ENCODE measurements at regions of chr1 and their contacts with region 1.

Region 1: DNA sequence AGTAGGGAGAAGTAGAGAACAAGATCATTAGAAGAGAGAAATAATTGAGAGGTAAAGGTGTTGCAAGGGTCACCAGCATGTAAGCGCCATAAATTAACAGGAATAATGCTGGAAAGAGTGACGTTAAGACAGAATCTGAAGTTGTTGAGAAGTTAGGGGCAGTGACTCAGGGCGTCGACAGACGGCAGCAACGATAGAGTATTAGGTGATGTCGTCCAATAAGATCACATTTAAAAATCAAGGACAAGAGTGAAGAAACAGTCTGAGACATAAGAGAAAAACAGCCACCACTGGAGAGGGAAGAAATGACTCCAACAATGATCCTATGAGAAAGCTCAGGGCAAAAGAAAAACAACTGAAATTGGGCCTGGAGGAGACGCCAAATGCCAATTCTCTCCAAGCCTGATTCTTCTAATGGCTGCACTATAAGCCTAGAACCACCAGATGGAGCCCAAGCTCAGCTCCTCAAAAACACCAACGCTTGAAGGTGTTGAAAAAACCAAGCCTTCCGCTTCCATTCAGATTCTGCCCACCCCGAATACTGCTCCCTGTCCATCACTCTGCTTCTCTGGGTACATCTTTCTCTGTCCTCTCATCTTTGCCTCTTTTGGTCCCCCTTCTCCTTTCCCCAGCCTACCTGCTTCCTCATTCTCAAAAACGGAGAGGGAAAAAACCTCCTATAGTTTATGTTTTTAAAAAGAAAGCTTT is 70.0 kb downstream of the LUZP1 start:
- DNase-seq: peak; percentile 52 to 59
- H3K4me3 ChIP-seq: no peak overlapping the region
- H3K4me3 Mint-ChIP-seq: no peak overlapping the region
- H3K27ac Mint-ChIP-seq: peak overlapping the region; percentile 41
- H3K4me1 ChIP-seq: peaks cover 15% of the 10 kb centered on the region
- H3K4me1 Mint-ChIP-seq: peaks cover 50% of the 10 kb centered on the region
- H3K27me3 ChIP-seq: no peaks in the 10 kb centered on the region
- H3K27me3 Mint-ChIP-seq: no peaks in the 10 kb centered on the region
- CTCF ChIP-seq: peak; percentile 78 to 80

Region 2: DNA sequence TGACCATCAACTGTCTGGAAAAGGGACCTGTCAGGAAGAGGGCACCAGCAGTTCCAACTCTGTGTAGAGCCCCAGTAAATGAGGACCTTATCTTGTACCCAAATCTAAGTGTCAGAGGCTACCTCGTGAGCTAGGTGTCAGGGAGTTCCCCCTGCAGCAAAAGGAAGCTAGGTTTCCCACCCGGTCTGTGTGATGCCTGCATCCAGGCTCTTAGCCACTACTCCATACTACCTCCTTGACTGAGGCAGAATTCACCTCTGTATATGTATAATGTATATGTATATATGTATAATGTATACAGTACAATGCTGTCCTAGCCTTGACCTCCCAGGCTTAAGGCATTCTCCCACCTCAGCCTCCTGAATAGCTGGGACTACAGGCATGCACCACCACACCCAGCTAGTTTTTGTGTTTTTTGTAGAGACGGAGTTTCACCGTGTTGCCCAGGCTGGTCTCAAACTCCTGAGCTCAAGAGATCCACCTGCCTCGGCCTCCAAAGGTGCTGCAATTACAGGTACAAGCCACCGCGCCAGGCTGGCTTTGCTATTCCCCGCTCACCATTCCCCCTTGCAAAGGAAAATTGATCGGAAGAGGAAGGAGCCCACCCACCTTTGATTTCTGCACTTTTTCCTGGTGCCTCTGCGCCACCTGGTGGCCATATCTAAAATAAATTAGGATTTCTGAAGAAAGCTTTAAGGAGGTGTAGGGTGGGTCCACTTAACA is 85.8 kb after region 1 on chr1:
- CTCF ChIA-PET with region 1: interaction called, 84 read pairs
- POLR2A ChIA-PET with region 1: interaction called, 3 read pairs
- intact Hi-C with region 1: loop called (anchors 1 kb)
- DNase-seq: peak in 1 of 2 experiments; percentile 45
- H3K4me3 ChIP-seq: peak overlapping the region; percentile 23
- H3K4me3 Mint-ChIP-seq: peak overlapping the region; percentile 64
- H3K27ac Mint-ChIP-seq: no peak overlapping the region
- H3K4me1 ChIP-seq: no peaks in the 10 kb centered on the region
- H3K4me1 Mint-ChIP-seq: peaks cover 7% of the 10 kb centered on the region
- H3K27me3 ChIP-seq: no peaks in the 10 kb centered on the region
- H3K27me3 Mint-ChIP-seq: no peaks in the 10 kb centered on the region
- CTCF ChIP-seq: peak; percentile 63 to 76

Region 3: GRCh38 chr1:23216771-23217420 is 118.3 kb after region 1 on chr1:
- CTCF ChIA-PET with region 1: no interaction called
- POLR2A ChIA-PET with region 1: no interaction called
- intact Hi-C with region 1: no loop called
- DNase-seq: peak in 1 of 2 experiments; percentile 63
- H3K4me3 ChIP-seq: peak overlapping the region; percentile 71
- H3K4me3 Mint-ChIP-seq: peak overlapping the region; percentile 68
- H3K27ac Mint-ChIP-seq: no peak overlapping the region
- H3K4me1 ChIP-seq: peaks cover 4% of the 10 kb centered on the region
- H3K4me1 Mint-ChIP-seq: peaks cover 6% of the 10 kb centered on the region
- H3K27me3 ChIP-seq: no peaks in the 10 kb centered on the region
- H3K27me3 Mint-ChIP-seq: no peaks in the 10 kb centered on the region
- CTCF ChIP-seq: peak; percentile 60 to 80

Measured in Caco-2 (cell line).